ENCODE measurements at regions of chr1 and their contacts with region 1.

Region 1: DNA sequence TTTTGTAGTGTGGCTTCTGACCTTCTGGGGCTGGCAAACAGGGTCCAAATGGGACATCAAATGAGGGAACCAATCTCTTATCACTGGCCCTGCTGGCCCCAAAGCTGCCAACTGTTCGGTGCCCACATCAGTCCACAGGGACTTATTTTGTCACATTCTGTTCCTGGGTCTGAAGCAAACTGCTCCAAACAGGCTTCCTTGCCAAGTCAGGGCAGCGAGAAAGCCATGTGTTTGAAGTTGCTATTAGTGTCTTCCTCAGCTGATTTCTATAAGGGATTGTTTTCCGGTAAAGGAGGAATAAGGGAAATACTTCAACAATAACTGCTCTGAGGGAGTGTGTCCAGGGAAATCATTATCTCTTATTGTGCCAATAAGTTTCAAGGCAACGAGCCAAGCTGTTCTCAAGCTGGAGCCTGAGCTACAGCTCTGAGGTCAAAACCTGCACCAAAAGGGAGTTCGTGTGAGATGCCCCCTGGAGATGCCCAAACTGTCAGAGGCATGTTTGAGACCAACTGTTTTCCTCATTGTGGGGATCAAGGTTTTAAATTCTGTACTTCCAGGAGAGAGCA is 381.4 kb upstream of the PROX1 start:
- DNase-seq: no peak
- ATAC-seq: peak in 1 of 4 donors; percentile 43
- H3K4me3 ChIP-seq: no peak overlapping the region
- H3K27ac ChIP-seq: no peak overlapping the region
- H3K4me1 ChIP-seq: peaks cover 3% of the 10 kb centered on the region
- H3K27me3 ChIP-seq: no peaks in the 10 kb centered on the region
- CTCF ChIP-seq: no peak

Region 2: GRCh38 chr1:213868482-213868881 is 262.1 kb after region 1 on chr1:
- intact Hi-C with region 1: loop called in 1 of 2 experiments (anchors 5 kb)
- DNase-seq: no peak
- ATAC-seq: peak; percentile 47 to 81 (median 69)
- H3K4me3 ChIP-seq: no peak overlapping the region
- H3K27ac ChIP-seq: no peak overlapping the region
- H3K4me1 ChIP-seq: no peaks in the 10 kb centered on the region
- H3K27me3 ChIP-seq: no peaks in the 10 kb centered on the region
- CTCF ChIP-seq: no peak